Dendritic cell treated with granulocyte-macrophage colony-stimulating factor and Interleukin-4, amounts not matched to agents 40 ng/mL and 50 ng/mL, for 4 days (primary cell): ENCODE measurements at regions of chr6 and their contacts with region 1.

Region 1: GRCh38 chr6:47103931-47104330 is 61.8 kb upstream of the ADGRF1 start:
- H3K4me3 Mint-ChIP-seq: no peak overlapping the region
- H3K27ac Mint-ChIP-seq: no peak overlapping the region
- H3K4me1 Mint-ChIP-seq: peaks cover 20% of the 10 kb centered on the region
- H3K27me3 Mint-ChIP-seq: peaks cover 83% of the 10 kb centered on the region

Region 2: DNA sequence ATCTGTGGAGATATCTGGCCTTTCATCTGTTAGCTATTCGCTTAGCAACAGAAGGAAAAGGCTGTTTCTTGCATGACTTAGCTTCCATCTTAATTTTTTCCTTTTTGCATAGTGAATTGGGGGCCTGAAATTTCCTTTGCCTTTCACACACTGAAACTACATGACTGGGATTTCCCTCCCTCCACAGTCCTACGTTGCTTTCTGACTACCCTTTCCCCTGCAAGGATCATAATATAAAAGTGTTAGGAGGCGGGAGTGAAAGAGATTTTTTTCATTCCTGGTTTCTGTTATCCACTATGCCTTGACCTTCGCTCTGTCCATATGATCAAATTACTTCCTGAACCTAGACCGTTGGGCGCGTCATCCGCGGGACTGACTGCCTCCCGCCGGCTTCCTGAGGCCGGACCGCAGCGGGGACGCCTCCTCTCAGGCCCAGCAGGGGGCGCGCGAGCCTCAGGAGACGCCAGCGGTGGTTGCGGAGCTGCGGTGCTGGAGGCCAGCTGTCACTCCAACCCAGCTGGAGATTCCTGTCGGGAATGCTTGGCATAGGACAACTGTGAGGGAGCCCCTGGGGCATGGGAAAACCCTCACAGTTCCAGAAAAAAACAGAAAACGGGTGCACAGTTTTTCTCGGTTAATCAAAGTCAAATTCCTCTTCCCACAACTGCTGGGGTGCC is 255.1 kb before region 1 on chr6:
- intact Hi-C with region 1: no loop called
- H3K4me3 Mint-ChIP-seq: peak overlapping the region; percentile 30
- H3K27ac Mint-ChIP-seq: no peak overlapping the region
- H3K4me1 Mint-ChIP-seq: peaks cover 11% of the 10 kb centered on the region
- H3K27me3 Mint-ChIP-seq: peaks cover 13% of the 10 kb centered on the region

Region 3: GRCh38 chr6:47168183-47168582 is 64.3 kb after region 1 on chr6:
- intact Hi-C with region 1: loop called (anchors 10 kb)
- H3K4me3 Mint-ChIP-seq: no peak overlapping the region
- H3K27ac Mint-ChIP-seq: no peak overlapping the region
- H3K4me1 Mint-ChIP-seq: peaks cover 63% of the 10 kb centered on the region
- H3K27me3 Mint-ChIP-seq: peaks cover 21% of the 10 kb centered on the region

Region 4: GRCh38 chr6:47221565-47221964 is 117.6 kb after region 1 on chr6:
- intact Hi-C with region 1: loop called (anchors 10 kb)
- H3K4me3 Mint-ChIP-seq: no peak overlapping the region
- H3K27ac Mint-ChIP-seq: no peak overlapping the region
- H3K4me1 Mint-ChIP-seq: peaks cover 6% of the 10 kb centered on the region
- H3K27me3 Mint-ChIP-seq: peaks cover 38% of the 10 kb centered on the region